Activated CD4-positive, alpha-beta memory T cell treated with anti-CD3 and anti-CD28 coated beads for 36 hours (primary cell): ENCODE measurements at regions of chr2 and their contacts with region 1.

Region 1: GRCh38 chr2:157497638-157498314 is 53.9 kb upstream of the CYTIP start:
- DNase-seq: no peak
- H3K4me3 Mint-ChIP-seq: no peak overlapping the region
- H3K27ac Mint-ChIP-seq: no peak overlapping the region
- H3K4me1 Mint-ChIP-seq: peaks cover 9% of the 10 kb centered on the region
- H3K27me3 Mint-ChIP-seq: no peaks in the 10 kb centered on the region

Region 2: GRCh38 chr2:157349949-157350515 is 147.7 kb before region 1 on chr2:
- CTCF ChIA-PET with region 1: no interaction called
- POLR2A ChIA-PET with region 1: no interaction called
- intact Hi-C with region 1: no loop called
- DNase-seq: no peak
- H3K4me3 Mint-ChIP-seq: no peak overlapping the region
- H3K27ac Mint-ChIP-seq: no peak overlapping the region
- H3K4me1 Mint-ChIP-seq: peaks cover 14% of the 10 kb centered on the region
- H3K27me3 Mint-ChIP-seq: no peaks in the 10 kb centered on the region

Region 3: GRCh38 chr2:157420771-157421323 is 76.9 kb before region 1 on chr2:
- CTCF ChIA-PET with region 1: no interaction called
- POLR2A ChIA-PET with region 1: no interaction called
- intact Hi-C with region 1: no loop called
- DNase-seq: peak; percentile 61
- H3K4me3 Mint-ChIP-seq: peak overlapping the region; percentile 38
- H3K27ac Mint-ChIP-seq: peak overlapping the region; percentile 97
- H3K4me1 Mint-ChIP-seq: peaks cover 74% of the 10 kb centered on the region
- H3K27me3 Mint-ChIP-seq: no peaks in the 10 kb centered on the region

Region 4: DNA sequence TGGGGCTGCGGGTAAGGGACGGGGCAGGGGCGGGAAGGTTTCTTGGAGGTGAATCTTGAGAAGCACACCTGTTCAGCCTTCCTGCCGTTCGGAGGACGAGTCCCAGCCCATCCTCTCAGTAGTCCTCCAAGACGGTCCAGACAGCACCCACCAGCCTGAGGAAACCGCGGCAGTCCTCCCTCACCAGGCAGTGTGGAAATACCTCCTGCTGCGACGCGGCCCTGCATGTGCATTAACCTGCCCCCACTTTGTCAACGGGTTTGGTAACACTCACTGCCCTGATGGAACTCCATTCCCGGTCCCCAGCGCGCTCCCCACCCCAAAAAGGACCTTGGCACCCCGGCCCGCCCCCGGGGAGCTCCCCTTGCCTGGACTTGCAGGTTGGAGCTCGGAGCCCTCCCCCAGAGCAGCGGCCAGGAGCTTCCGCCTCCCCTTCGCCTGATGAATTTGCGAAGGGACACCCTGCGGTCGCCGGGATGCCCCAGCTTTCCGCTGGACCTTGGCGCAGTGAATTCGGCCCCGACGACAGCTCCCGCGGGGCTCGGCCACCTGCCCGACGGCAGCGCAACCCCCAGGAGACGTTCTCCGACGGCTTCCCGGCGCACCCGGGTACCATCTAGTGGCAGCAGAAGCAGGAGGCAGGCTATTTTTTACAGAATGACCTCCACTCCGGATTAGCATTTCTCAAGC is 99.4 kb after region 1 on chr2:
- CTCF ChIA-PET with region 1: interaction called, 21 read pairs
- POLR2A ChIA-PET with region 1: no interaction called
- intact Hi-C with region 1: loop called (anchors 1 kb)
- DNase-seq: peak; percentile 72
- H3K4me3 Mint-ChIP-seq: peak overlapping the region; percentile 61
- H3K27ac Mint-ChIP-seq: no peak overlapping the region
- H3K4me1 Mint-ChIP-seq: peaks cover 11% of the 10 kb centered on the region
- H3K27me3 Mint-ChIP-seq: peaks cover 4% of the 10 kb centered on the region

Region 5: DNA sequence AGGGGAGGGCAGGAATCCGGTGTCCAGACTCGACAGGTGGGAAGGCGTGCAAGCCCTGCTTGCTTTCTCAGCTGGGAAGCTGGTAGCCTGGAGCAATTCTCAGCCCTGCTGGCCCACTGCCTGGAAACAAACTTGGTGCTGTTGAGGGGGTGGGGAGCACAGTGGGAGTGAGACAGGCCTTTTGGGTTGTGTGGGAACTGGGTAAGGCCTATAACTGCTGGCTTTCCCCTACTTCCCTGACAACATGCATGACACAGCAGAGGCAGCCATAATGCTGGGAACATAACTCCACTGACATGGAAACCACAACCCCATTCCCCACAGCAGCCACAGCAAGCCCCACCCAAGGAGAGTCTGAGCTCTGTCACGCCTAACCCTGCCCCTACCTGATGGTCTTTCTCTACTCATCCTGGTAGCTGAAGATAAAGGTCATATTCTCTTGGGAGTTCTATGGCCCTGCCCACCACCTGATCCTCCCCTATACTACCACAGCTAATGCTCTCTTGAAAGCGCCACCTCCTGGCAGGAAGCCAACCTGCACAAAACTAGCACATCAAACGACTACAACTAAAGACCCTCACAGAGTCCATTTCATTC is 253.8 kb after region 1 on chr2:
- CTCF ChIA-PET with region 1: interaction called, 5 read pairs
- POLR2A ChIA-PET with region 1: no interaction called
- intact Hi-C with region 1: loop called (anchors 1 kb)
- DNase-seq: peak; percentile 39
- H3K4me3 Mint-ChIP-seq: no peak overlapping the region
- H3K27ac Mint-ChIP-seq: no peak overlapping the region
- H3K4me1 Mint-ChIP-seq: peaks cover 13% of the 10 kb centered on the region
- H3K27me3 Mint-ChIP-seq: no peaks in the 10 kb centered on the region

Region 6: DNA sequence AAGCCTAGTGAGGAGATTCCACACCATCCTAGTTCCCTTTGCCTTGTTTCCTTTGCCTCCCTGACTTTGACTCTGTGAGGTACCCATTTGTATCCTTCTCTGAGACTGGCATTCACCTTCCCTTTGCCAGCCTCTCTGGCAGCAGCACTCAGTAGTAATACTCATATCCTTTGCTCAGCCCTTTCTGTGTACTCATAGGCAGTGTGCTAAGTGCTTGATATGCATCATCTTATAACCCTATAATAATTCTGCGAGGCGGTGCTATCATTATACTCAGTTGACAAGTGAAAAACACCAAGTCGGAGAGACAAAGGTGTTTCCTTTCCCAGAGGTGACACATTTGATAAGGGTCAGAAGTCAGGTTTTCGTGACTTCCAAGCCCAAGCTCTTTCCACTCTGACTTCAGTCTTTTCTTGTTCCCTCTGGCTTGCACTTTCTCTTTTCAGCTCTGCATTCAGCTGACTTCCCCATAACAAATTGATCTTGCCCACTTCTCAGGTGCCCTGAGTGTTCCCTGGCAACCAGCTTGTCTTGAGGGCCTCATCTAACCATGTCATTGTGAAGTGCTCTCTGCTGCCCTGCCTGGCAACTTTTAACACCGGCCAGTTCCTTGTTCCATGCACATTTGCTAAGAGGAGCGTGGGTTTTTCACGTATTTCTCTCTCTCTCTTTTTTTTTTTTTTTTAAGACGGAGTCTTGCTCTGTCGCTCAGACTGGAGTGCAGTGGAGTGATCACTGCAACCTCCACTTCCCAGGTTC is 509.4 kb after region 1 on chr2:
- CTCF ChIA-PET with region 1: interaction called, 8 read pairs
- POLR2A ChIA-PET with region 1: no interaction called
- intact Hi-C with region 1: loop called (anchors 1 kb)
- DNase-seq: peak; percentile 25
- H3K4me3 Mint-ChIP-seq: no peak overlapping the region
- H3K27ac Mint-ChIP-seq: no peak overlapping the region
- H3K4me1 Mint-ChIP-seq: peaks cover 6% of the 10 kb centered on the region
- H3K27me3 Mint-ChIP-seq: peaks cover 2% of the 10 kb centered on the region